ENCODE measurements at regions of chr15 and their contacts with region 1.

Region 1: GRCh38 chr15:99755692-99756409 is 22.6 kb upstream of the LYSMD4 start:
- DNase-seq: peak; percentile 46
- H3K4me3 Mint-ChIP-seq: no peak overlapping the region
- H3K27ac Mint-ChIP-seq: no peak overlapping the region
- H3K4me1 Mint-ChIP-seq: peaks cover 5% of the 10 kb centered on the region
- H3K27me3 Mint-ChIP-seq: peaks cover 18% of the 10 kb centered on the region

Region 2: GRCh38 chr15:99733268-99734039 is 22.4 kb before region 1 on chr15 and contains the start of gene LYSMD4:
- CTCF ChIA-PET with region 1: interaction called, 12 read pairs
- DNase-seq: peak; percentile 99
- H3K4me3 Mint-ChIP-seq: peak within 1 kb of the TSS; percentile 83
- H3K27ac Mint-ChIP-seq: peak within 1 kb of the TSS; percentile 96
- H3K4me1 Mint-ChIP-seq: peaks cover 42% of the 10 kb centered on the region
- H3K27me3 Mint-ChIP-seq: no peaks in the 10 kb centered on the region